ENCODE measurements at regions of chr2 and their contacts with region 1.

Region 1: GRCh38 chr2:202178342-202178958 is 59.9 kb downstream of the SUMO1 start:
- DNase-seq: peak; percentile 69
- ATAC-seq: peak; percentile 93

Region 2: GRCh38 chr2:201854221-201854801 is 324.1 kb before region 1 on chr2:
- intact Hi-C with region 1: loop called (anchors 5 kb)
- DNase-seq: no peak
- ATAC-seq: no peak

Region 3: GRCh38 chr2:202149155-202149762 is 29.2 kb before region 1 on chr2:
- intact Hi-C with region 1: no loop called
- DNase-seq: peak; percentile 71
- ATAC-seq: peak; percentile 72

Measured in sciatic nerve (tissue), 2 donors.